HAP-1 (cell line): ENCODE measurements at regions of chrX and their contacts with region 1.

Region 1: GRCh38 chrX:154596290-154596929 is 11.5 kb downstream of the CTAG1A start:
- DNase-seq: peak; percentile 87 to 90
- H3K4me3 ChIP-seq: no peak overlapping the region
- H3K4me1 ChIP-seq: peaks cover 14% of the 10 kb centered on the region
- H3K27me3 ChIP-seq: no peaks in the 10 kb centered on the region

Region 2: GRCh38 chrX:154748712-154749343 is 152.4 kb after region 1 on chrX:
- in situ Hi-C with region 1: loop called (anchors 25 kb)
- DNase-seq: peak; percentile 44 to 64
- H3K4me3 ChIP-seq: no peak overlapping the region
- H3K4me1 ChIP-seq: peaks cover 5% of the 10 kb centered on the region
- H3K27me3 ChIP-seq: peaks cover 35% of the 10 kb centered on the region

Region 3: GRCh38 chrX:154855256-154855655 is 258.8 kb after region 1 on chrX:
- in situ Hi-C with region 1: loop called (anchors 25 kb)
- DNase-seq: no peak
- H3K4me3 ChIP-seq: no peak overlapping the region
- H3K4me1 ChIP-seq: no peaks in the 10 kb centered on the region
- H3K27me3 ChIP-seq: no peaks in the 10 kb centered on the region